ENCODE measurements at regions of chr5 and their contacts with region 1.

Region 1: DNA sequence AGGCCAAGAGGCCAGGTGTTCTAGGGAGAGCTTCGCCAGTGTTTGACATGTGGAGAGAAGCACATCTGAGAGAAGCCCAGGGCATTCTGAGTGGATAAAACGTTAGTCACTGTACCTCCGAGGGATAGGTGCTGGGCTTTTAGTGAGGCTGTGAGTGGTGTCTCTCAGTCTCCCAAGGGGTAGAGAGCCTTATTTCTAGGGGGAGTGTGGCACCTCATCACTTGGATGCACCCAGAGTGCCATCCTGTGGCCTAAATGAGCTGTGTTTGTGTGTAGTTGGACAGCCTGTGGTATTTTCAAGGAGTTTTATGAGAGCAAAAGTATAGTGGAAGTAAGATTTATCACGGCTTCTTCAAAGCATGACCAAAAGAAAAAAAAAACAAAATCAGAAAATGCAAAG is 1046.9 kb upstream of the WWC1 start:
- DNase-seq: no peak
- ATAC-seq: no peak
- H3K4me3 ChIP-seq: no peak overlapping the region
- H3K4me3 Mint-ChIP-seq: no peak overlapping the region
- H3K27ac ChIP-seq: no peak overlapping the region
- H3K27ac Mint-ChIP-seq: no peak overlapping the region
- H3K4me1 ChIP-seq: no peaks in the 10 kb centered on the region
- H3K4me1 Mint-ChIP-seq: no peaks in the 10 kb centered on the region
- H3K27me3 ChIP-seq: no peaks in the 10 kb centered on the region
- H3K27me3 Mint-ChIP-seq: peaks cover 0 to 4% (median 0%) of the 10 kb centered on the region in 5 donors

Region 2: GRCh38 chr5:166845044-166845443 is 399.5 kb before region 1 on chr5:
- CTCF ChIA-PET with region 1: no interaction called
- POLR2A ChIA-PET with region 1: interaction called, 11 read pairs
- intact Hi-C with region 1: no loop called
- DNase-seq: no peak
- ATAC-seq: no peak
- H3K4me3 ChIP-seq: no peak overlapping the region
- H3K4me3 Mint-ChIP-seq: no peak overlapping the region
- H3K27ac ChIP-seq: no peak overlapping the region
- H3K27ac Mint-ChIP-seq: no peak overlapping the region
- H3K4me1 ChIP-seq: no peaks in the 10 kb centered on the region
- H3K4me1 Mint-ChIP-seq: no peaks in the 10 kb centered on the region
- H3K27me3 ChIP-seq: no peaks in the 10 kb centered on the region
- H3K27me3 Mint-ChIP-seq: no peaks in the 10 kb centered on the region

Measured in naive thymus-derived CD4-positive, alpha-beta T cell (primary cell).